ENCODE measurements at regions of chr12 and their contacts with region 1.

Region 1: GRCh38 chr12:29365091-29365490 is 15.9 kb downstream of the ERGIC2 start:
- DNase-seq: no peak
- H3K4me3 Mint-ChIP-seq: no peak overlapping the region
- H3K27ac Mint-ChIP-seq: no peak overlapping the region
- H3K4me1 Mint-ChIP-seq: peaks cover 7% of the 10 kb centered on the region
- H3K27me3 Mint-ChIP-seq: no peaks in the 10 kb centered on the region

Region 2: DNA sequence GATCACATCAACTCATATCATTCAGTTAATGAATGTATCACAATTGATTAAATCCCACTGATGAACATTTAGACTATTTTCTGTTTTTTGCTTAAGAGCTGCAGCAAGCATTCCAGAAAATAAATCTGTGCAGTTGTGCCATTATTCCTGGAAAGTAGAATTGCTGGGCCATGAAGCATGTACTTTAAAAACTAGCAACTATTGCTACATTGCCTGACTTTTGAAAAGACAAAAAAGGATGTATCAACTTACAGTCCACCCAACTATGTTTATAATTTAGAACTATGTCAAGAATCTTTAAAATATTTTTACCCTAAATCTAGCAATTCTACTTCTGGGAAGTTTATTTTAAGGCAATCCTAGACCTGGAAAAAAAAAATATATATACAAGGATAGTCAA is 49.3 kb after region 1 on chr12:
- intact Hi-C with region 1: loop called (anchors 1 kb)
- DNase-seq: no peak
- H3K4me3 Mint-ChIP-seq: no peak overlapping the region
- H3K27ac Mint-ChIP-seq: no peak overlapping the region
- H3K4me1 Mint-ChIP-seq: no peaks in the 10 kb centered on the region
- H3K27me3 Mint-ChIP-seq: peaks cover 7% of the 10 kb centered on the region

Measured in activated T-helper 1 cell treated with anti-CD3 and anti-CD28 coated beads, Interleukin-12 subunit alpha, Interleukin-12 subunit beta, Interleukin-2, Interleukin-4 antibody, amounts not matched to agents 30 ng/mL and 10 ng/mL and 1 ng/mL, durations not matched to agents 14 hours and 24 hours and 36 hours (primary cell).